ENCODE measurements at regions of chr4 and their contacts with region 1.

Region 1: DNA sequence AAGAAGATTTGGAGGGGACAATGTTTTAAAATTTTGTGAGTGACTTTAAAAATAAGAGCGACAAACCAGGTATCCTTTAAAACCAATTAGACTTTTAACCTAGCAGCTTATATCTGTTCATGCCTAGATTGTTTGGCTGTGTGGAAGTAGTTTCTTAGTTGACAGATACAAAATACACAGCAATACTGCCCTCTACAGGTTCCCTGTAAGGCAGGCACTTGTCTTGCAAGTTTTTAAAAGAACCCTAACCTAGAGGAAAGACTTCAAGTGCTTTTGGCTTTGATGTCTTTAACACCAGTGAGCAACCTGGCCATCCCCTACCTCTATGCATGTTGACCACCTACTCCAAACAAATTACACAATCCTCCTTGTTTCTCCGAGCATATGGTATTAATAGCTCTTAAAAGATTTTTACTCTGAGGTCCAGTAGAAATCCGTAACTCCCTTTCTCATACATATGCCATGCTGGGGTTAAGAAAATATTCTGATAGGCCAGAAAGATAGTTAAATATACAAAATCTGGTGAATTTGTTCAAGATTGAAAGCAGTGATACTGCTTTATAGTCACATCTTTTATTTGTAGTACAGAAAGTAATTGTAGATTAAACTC is 273.0 kb downstream of the ARHGAP24 start:
- DNase-seq: no peak
- ATAC-seq: peak; percentile 95
- H3K4me3 ChIP-seq: no peak overlapping the region
- H3K27ac ChIP-seq: no peak overlapping the region
- H3K4me1 ChIP-seq: no peaks in the 10 kb centered on the region
- H3K27me3 ChIP-seq: no peaks in the 10 kb centered on the region; a peak in 1 of 4 replicates
- CTCF ChIP-seq: peak; percentile 74 to 79 (median 75)
- EP300 ChIP-seq: no peak
- POLR2A ChIP-seq: no peak
- RAD21 ChIP-seq: peak; percentile 98

Region 2: DNA sequence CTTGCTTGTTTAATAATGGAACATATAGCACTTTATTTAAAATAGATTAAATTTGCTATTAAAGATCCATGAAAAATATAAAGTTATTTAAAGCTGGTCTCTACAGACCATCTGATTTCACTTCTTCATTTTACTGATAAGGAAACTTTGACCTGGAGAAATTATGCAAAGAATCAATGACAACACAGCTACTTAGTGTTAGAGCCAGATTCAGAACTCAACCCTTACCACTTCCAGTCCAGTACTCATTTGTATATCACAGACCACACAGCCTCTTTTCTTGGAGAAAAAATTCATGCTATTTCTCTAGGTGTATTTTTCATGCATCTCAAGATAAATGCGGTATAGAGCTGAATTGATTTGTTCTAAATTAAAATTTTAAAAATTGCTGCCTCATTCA is 815.5 kb before region 1 on chr4:
- CTCF ChIA-PET with region 1: no interaction called
- POLR2A ChIA-PET with region 1: no interaction called
- RAD21 ChIA-PET with region 1: no interaction called
- SMC1A ChIA-PET with region 1: no interaction called
- in situ Hi-C with region 1: no loop called
- intact Hi-C with region 1: no loop called
- DNase-seq: no peak
- ATAC-seq: no peak
- H3K4me3 ChIP-seq: no peak overlapping the region
- H3K27ac ChIP-seq: no peak overlapping the region
- H3K4me1 ChIP-seq: no peaks in the 10 kb centered on the region
- H3K27me3 ChIP-seq: no peaks in the 10 kb centered on the region
- CTCF ChIP-seq: no peak
- EP300 ChIP-seq: no peak
- POLR2A ChIP-seq: no peak
- RAD21 ChIP-seq: no peak

Region 3: DNA sequence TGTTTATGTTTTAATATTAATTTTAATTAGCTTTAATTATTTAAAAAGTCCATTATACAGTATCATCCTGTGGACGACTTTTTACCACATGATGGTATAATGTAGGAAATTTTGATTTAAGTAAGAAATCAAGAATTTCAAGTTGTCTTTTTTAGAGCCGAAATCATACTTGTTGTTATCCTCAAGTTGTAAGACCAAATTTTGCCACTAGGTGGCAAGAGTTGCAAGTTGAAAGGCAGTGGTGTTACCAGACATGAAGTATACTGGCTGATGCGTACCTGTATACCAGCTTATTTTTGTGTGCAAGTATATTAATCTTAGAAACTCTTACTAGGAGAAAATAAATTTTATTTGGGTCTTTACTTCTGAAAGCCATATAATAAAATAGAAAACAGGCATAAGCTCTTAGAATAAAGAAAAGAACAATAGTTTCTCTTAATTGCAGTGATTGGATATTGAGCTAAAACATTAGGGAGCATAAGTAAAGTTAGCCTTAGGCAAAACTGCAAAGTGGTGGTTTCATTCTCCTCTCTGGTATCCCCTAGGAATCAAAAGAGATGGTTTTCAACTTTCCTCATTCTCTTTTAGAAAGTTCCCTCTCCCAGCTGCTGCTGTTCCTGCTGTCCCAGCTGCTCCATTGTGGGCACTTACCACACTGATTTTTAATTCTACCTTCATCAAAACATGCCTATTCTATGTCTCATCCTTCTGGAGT is 663.5 kb before region 1 on chr4:
- CTCF ChIA-PET with region 1: interaction called, 19 read pairs
- POLR2A ChIA-PET with region 1: no interaction called
- RAD21 ChIA-PET with region 1: interaction called, 7 read pairs
- SMC1A ChIA-PET with region 1: interaction called, 8 read pairs
- in situ Hi-C with region 1: no loop called
- intact Hi-C with region 1: loop called (anchors 2 kb)
- DNase-seq: no peak
- ATAC-seq: peak; percentile 84
- H3K4me3 ChIP-seq: no peak overlapping the region
- H3K27ac ChIP-seq: no peak overlapping the region
- H3K4me1 ChIP-seq: no peaks in the 10 kb centered on the region
- H3K27me3 ChIP-seq: no peaks in the 10 kb centered on the region
- CTCF ChIP-seq: peak; percentile 58 to 60 (median 60)
- EP300 ChIP-seq: no peak
- POLR2A ChIP-seq: no peak
- RAD21 ChIP-seq: peak; percentile 58

Region 4: DNA sequence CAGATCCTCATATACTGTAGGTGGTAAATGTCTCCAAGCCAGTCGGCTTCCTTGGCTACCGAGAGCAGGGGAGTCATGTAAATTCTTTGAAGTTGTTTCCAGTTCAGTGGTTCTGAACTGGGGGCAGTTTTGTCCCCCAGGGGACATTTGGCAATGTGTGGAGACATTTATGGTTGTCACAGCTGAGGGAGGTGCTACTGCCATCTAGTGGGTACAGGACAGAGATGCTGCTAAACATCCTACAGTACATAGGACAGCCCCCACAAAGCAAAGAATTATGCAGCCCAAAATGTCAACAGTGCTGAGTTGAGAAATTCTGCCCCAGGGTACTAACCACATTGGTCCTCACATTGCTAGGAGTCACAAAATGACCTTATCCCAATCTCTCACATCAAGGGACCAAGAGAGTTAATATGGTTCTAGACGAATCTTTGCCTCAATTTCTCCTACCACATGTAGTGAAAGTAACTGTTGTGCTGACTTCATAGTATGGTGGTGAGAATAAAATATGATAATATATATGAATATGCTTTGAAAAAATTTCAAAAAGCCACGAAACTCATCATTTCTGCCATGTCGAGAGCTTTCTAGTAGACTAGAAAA is 377.5 kb before region 1 on chr4:
- CTCF ChIA-PET with region 1: interaction called, 4 read pairs
- POLR2A ChIA-PET with region 1: no interaction called
- RAD21 ChIA-PET with region 1: interaction called, 5 read pairs
- SMC1A ChIA-PET with region 1: interaction called, 3 read pairs
- in situ Hi-C with region 1: no loop called
- intact Hi-C with region 1: loop called (anchors 2 kb)
- DNase-seq: peak; percentile 11
- ATAC-seq: peak; percentile 99
- H3K4me3 ChIP-seq: no peak overlapping the region
- H3K27ac ChIP-seq: no peak overlapping the region
- H3K4me1 ChIP-seq: no peaks in the 10 kb centered on the region
- H3K27me3 ChIP-seq: no peaks in the 10 kb centered on the region
- CTCF ChIP-seq: peak; percentile 61 to 82 (median 68)
- EP300 ChIP-seq: no peak
- POLR2A ChIP-seq: no peak
- RAD21 ChIP-seq: peak; percentile 59

Region 5: DNA sequence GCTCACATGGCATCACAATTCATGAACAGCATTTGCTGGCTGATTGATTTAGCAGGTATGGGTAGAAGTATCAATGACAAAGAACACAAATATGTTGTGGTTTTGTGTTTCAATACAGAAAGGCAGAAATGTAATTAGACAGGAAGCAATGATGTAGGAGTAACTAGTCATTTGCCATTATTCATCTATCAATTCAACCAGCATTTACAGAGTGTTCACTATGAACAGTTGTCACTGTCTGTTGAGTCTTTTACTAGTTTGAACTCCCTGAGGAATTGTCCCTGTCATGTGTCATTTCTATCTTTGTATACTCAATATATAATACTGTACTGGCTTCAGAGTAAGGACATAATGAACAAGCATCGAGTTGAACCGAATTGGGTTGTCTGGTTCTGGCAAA is 324.6 kb before region 1 on chr4:
- CTCF ChIA-PET with region 1: interaction called, 57 read pairs
- POLR2A ChIA-PET with region 1: no interaction called
- RAD21 ChIA-PET with region 1: interaction called, 16 read pairs
- SMC1A ChIA-PET with region 1: interaction called, 22 read pairs
- in situ Hi-C with region 1: loop called (anchors 5 kb)
- intact Hi-C with region 1: loop called (anchors 1 kb)
- DNase-seq: no peak
- ATAC-seq: peak; percentile 73
- H3K4me3 ChIP-seq: no peak overlapping the region
- H3K27ac ChIP-seq: no peak overlapping the region
- H3K4me1 ChIP-seq: no peaks in the 10 kb centered on the region
- H3K27me3 ChIP-seq: peaks cover 0 to 1% of the 10 kb centered on the region in 2 experiments; a peak in 1 of 4 replicates
- CTCF ChIP-seq: no peak
- EP300 ChIP-seq: no peak
- POLR2A ChIP-seq: no peak
- RAD21 ChIP-seq: no peak

Region 6: GRCh38 chr4:85522277-85522676 is 225.7 kb before region 1 on chr4:
- CTCF ChIA-PET with region 1: interaction called, 13 read pairs
- POLR2A ChIA-PET with region 1: no interaction called
- RAD21 ChIA-PET with region 1: no interaction called
- SMC1A ChIA-PET with region 1: interaction called, 3 read pairs
- in situ Hi-C with region 1: no loop called
- intact Hi-C with region 1: no loop called
- DNase-seq: no peak
- ATAC-seq: peak; percentile 73
- H3K4me3 ChIP-seq: no peak overlapping the region
- H3K27ac ChIP-seq: no peak overlapping the region
- H3K4me1 ChIP-seq: no peaks in the 10 kb centered on the region
- H3K27me3 ChIP-seq: no peaks in the 10 kb centered on the region; a peak in 1 of 4 replicates
- CTCF ChIP-seq: no peak
- EP300 ChIP-seq: no peak
- POLR2A ChIP-seq: no peak
- RAD21 ChIP-seq: no peak

Region 7: DNA sequence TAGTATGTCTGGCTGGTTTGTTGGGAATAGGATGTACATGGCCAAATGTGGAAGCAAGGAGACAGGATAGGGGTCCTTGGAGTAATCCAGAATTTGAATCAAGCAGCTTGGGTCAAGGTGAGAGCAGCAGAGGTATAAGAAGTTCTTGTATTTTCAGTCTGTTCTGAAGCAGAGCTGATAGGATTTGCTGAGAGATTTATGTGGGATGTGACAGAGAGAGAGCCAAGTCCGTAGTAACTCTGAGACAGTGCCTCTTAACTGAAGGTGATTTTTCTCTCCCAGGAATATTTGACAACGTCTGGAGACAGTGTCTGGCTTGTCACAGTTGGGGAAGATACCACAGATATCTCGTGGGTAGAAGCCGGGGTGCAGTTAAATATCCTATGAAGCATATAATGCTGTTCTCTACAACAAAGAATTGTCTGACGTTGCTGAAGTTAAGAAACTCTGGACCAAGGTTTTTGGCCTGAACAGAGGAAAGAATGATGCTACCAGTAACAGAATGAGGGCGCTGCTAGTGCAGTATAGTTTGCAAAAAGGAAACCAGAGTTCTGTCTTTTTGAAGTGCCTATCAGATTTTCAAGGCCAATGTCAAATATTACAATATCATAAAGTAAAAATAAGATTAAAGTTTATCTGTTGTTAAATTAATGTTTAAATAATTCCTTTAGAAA is 89.1 kb before region 1 on chr4:
- CTCF ChIA-PET with region 1: interaction called, 4 read pairs
- POLR2A ChIA-PET with region 1: no interaction called
- RAD21 ChIA-PET with region 1: interaction called, 4 read pairs
- SMC1A ChIA-PET with region 1: interaction called, 13 read pairs
- in situ Hi-C with region 1: no loop called
- intact Hi-C with region 1: loop called (anchors 5 kb)
- DNase-seq: no peak
- ATAC-seq: no peak
- H3K4me3 ChIP-seq: no peak overlapping the region
- H3K27ac ChIP-seq: no peak overlapping the region
- H3K4me1 ChIP-seq: peaks cover 27% of the 10 kb centered on the region
- H3K27me3 ChIP-seq: no peaks in the 10 kb centered on the region
- CTCF ChIP-seq: 0 out of 6 replicates have a peak, but pooled peaks of 1 of the 3 experiments have one; percentile 11
- EP300 ChIP-seq: no peak
- POLR2A ChIP-seq: no peak
- RAD21 ChIP-seq: peak; percentile 32; the same call in 1 of the 2 replicates

Region 8: GRCh38 chr4:85761803-85762528 is 14.0 kb after region 1 on chr4:
- CTCF ChIA-PET with region 1: interaction called, 14 read pairs
- POLR2A ChIA-PET with region 1: no interaction called
- RAD21 ChIA-PET with region 1: interaction called, 4 read pairs
- SMC1A ChIA-PET with region 1: interaction called, 4 read pairs
- in situ Hi-C with region 1: no loop called
- intact Hi-C with region 1: no loop called
- DNase-seq: no peak
- ATAC-seq: no peak
- H3K4me3 ChIP-seq: no peak overlapping the region
- H3K27ac ChIP-seq: no peak overlapping the region
- H3K4me1 ChIP-seq: no peaks in the 10 kb centered on the region
- H3K27me3 ChIP-seq: no peaks in the 10 kb centered on the region; a peak in 1 of 4 replicates
- CTCF ChIP-seq: no peak
- EP300 ChIP-seq: no peak
- POLR2A ChIP-seq: no peak
- RAD21 ChIP-seq: no peak

Measured in GM12878 (cell line).